Activated CD8-positive, alpha-beta T cell treated with anti-CD3 and anti-CD28 coated beads, Interleukin-2, amount 10 ng/mL, durations not matched to agents 7 days and 5 days (primary cell): ENCODE measurements at regions of chr11 and their contacts with region 1.

Region 1: GRCh38 chr11:63738720-63739360 is 29.7 kb downstream of the ZFTA start:
- DNase-seq: peak; percentile 74
- ATAC-seq: no peak
- H3K4me3 Mint-ChIP-seq: no peak overlapping the region
- H3K27ac Mint-ChIP-seq: no peak overlapping the region
- H3K4me1 Mint-ChIP-seq: peaks cover 2% of the 10 kb centered on the region
- H3K27me3 Mint-ChIP-seq: no peaks in the 10 kb centered on the region

Region 2: GRCh38 chr11:63635762-63636465 is 102.9 kb before region 1 on chr11:
- CTCF ChIA-PET with region 1: interaction called, 31 read pairs
- POLR2A ChIA-PET with region 1: no interaction called
- DNase-seq: peak; percentile 74
- ATAC-seq: peak; percentile 79
- H3K4me3 Mint-ChIP-seq: no peak overlapping the region
- H3K27ac Mint-ChIP-seq: no peak overlapping the region
- H3K4me1 Mint-ChIP-seq: peaks cover 10% of the 10 kb centered on the region
- H3K27me3 Mint-ChIP-seq: no peaks in the 10 kb centered on the region

Region 3: DNA sequence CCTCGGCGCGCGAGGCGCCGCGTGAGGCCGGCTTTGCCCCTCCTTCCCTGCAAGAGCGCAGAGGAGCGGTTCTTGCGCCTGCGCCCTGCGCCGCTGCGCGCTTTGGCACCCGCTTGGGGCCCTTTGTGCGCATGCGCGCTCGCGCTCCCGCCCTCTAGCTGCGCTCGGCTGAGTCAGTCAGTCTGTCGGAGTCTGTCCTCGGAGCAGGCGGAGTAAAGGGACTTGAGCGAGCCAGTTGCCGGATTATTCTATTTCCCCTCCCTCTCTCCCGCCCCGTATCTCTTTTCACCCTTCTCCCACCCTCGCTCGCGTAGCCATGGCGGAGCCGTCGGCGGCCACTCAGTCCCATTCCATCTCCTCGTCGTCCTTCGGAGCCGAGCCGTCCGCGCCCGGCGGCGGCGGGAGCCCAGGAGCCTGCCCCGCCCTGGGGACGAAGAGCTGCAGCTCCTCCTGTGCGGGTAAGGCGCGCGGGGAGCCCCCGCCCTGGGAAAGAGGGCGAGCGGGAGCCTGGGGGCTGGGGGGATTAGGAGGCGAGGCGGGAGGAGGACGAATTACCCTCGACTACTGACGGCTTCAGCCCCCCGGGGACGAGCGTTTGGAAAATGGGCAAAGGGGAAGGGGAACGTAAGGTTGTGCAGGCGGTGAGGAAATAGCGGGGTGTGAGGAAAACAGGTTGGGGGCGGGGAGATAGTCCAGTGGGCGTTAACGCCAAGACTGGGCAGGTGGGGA is 57.4 kb before region 1 on chr11 and contains the start of gene RTN3:
- CTCF ChIA-PET with region 1: interaction called, 23 read pairs
- POLR2A ChIA-PET with region 1: no interaction called
- DNase-seq: peak; percentile 99
- ATAC-seq: peak; percentile 96
- H3K4me3 Mint-ChIP-seq: peak within 1 kb of the TSS; percentile 86
- H3K27ac Mint-ChIP-seq: peak within 1 kb of the TSS; percentile 78
- H3K4me1 Mint-ChIP-seq: peaks cover 27% of the 10 kb centered on the region
- H3K27me3 Mint-ChIP-seq: peaks cover 8% of the 10 kb centered on the region
- total RNA-seq, gene RTN3: 62.2 to 62.4 TPM

Region 4: DNA sequence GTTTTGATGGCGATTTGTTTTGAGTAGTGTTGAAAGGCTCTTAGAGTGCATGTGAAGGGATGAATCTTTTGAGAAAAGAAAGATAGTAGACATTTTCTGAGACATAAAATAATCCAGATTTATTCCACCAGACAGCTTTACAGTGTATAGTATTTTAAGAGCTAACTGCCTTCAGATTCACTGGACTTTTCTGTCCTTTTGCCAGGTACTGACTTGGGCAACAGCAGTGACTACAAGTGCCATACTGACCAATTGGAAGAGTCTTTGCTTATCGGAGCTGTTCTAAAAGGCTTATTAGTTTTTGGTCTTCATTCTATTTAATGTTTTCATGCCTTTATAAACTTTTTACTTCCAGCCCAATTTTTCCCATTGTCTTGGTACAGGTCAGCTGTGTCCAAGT is 25.1 kb before region 1 on chr11:
- CTCF ChIA-PET with region 1: interaction called, 31 read pairs
- POLR2A ChIA-PET with region 1: no interaction called
- DNase-seq: no peak
- ATAC-seq: no peak
- H3K4me3 Mint-ChIP-seq: no peak overlapping the region
- H3K27ac Mint-ChIP-seq: no peak overlapping the region
- H3K4me1 Mint-ChIP-seq: peaks cover 4% of the 10 kb centered on the region
- H3K27me3 Mint-ChIP-seq: no peaks in the 10 kb centered on the region

Region 5: DNA sequence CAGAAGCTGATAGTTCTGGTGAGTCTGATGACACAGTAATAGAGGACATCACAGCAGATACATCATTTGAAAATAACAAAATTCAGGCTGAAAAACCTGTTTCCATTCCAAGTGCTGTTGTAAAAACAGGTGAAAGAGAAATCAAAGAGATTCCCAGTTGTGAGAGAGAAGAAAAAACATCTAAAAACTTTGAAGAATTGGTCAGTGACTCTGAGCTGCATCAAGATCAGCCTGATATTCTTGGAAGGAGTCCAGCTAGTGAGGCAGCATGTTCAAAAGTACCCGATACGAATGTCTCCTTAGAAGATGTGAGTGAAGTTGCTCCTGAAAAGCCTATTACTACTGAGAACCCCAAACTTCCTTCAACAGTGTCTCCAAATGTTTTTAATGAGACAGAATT is 18.9 kb before region 1 on chr11:
- CTCF ChIA-PET with region 1: interaction called, 31 read pairs
- POLR2A ChIA-PET with region 1: no interaction called
- DNase-seq: no peak
- ATAC-seq: no peak
- H3K4me3 Mint-ChIP-seq: no peak overlapping the region
- H3K27ac Mint-ChIP-seq: no peak overlapping the region
- H3K4me1 Mint-ChIP-seq: no peaks in the 10 kb centered on the region
- H3K27me3 Mint-ChIP-seq: no peaks in the 10 kb centered on the region

Region 6: GRCh38 chr11:63901660-63902059 is 162.8 kb after region 1 on chr11:
- CTCF ChIA-PET with region 1: no interaction called
- POLR2A ChIA-PET with region 1: no interaction called
- DNase-seq: no peak
- ATAC-seq: peak; percentile 52
- H3K4me3 Mint-ChIP-seq: no peak overlapping the region
- H3K27ac Mint-ChIP-seq: peak overlapping the region; percentile 3
- H3K4me1 Mint-ChIP-seq: peaks cover 4% of the 10 kb centered on the region
- H3K27me3 Mint-ChIP-seq: no peaks in the 10 kb centered on the region